IMR-90 (cell line): ENCODE measurements at regions of chr3 and their contacts with region 1.

Region 1: GRCh38 chr3:170414202-170414663 is 4.4 kb upstream of the CLDN11 start:
- DNase-seq: peak; percentile 93
- ATAC-seq: peak; percentile 41
- H3K4me3 ChIP-seq: no peak overlapping the region
- H3K27ac ChIP-seq: no peak overlapping the region
- H3K4me1 ChIP-seq: peaks cover 2% of the 10 kb centered on the region
- H3K27me3 ChIP-seq: no peaks in the 10 kb centered on the region
- CTCF ChIP-seq: peak; percentile 98
- POLR2A ChIP-seq: no peak
- RAD21 ChIP-seq: peak; percentile 96

Region 2: GRCh38 chr3:170307671-170308403 is 106.4 kb before region 1 on chr3:
- CTCF ChIA-PET with region 1: interaction called, 7 read pairs
- POLR2A ChIA-PET with region 1: interaction called, 4 read pairs
- dilution Hi-C with region 1: no loop called
- in situ Hi-C with region 1: no loop called
- intact Hi-C with region 1: loop called (anchors 1 kb)
- DNase-seq: peak; percentile 79
- ATAC-seq: peak; percentile 10; the same call in 1 of the 2 replicates
- H3K4me3 ChIP-seq: no peak overlapping the region
- H3K27ac ChIP-seq: no peak overlapping the region
- H3K4me1 ChIP-seq: peaks cover 4% of the 10 kb centered on the region
- H3K27me3 ChIP-seq: no peaks in the 10 kb centered on the region
- CTCF ChIP-seq: no peak
- POLR2A ChIP-seq: no peak
- RAD21 ChIP-seq: no peak

Region 3: DNA sequence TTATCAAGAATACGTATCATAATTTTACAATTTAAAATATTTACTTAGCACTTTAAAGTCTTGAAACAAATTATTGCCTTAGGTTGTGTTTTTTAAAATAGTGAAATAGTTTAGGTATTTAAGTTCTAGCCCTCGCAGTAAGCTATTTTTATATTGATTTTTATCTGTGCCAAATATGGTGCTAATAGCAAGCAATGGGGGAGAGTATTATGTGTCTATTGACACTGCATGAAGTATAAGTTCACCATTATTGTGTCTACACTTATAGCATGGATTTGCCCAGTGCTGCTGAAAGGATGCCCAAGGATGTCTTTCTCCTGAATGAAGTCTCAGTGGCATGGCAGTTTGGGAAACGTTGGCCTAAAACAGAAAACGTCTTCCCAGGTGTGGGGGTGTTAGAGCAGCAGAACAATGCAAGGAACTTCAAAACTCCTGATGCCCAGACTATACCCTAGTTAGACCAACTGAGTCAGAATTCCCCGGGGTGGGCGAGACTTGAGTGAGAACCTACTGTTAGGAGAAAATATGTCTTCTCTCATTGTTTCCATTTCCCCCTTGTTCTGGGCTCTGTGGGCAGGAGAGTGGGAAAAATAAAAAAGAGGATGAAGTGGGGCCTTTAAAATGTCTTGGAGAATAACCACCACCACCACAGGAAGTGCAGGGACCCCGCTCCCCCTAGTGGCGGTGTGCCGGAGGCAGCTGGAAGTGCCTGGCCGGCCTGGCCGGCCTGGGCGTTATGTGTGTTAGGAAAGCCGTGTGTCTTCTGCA is 275.8 kb after region 1 on chr3:
- CTCF ChIA-PET with region 1: no interaction called
- POLR2A ChIA-PET with region 1: no interaction called
- dilution Hi-C with region 1: no loop called
- in situ Hi-C with region 1: no loop called
- intact Hi-C with region 1: loop called (anchors 2 kb)
- DNase-seq: peak; percentile 52
- ATAC-seq: peak; percentile 57
- H3K4me3 ChIP-seq: no peak overlapping the region
- H3K27ac ChIP-seq: peak overlapping the region; percentile 85
- H3K4me1 ChIP-seq: peaks cover 14% of the 10 kb centered on the region
- H3K27me3 ChIP-seq: no peaks in the 10 kb centered on the region
- CTCF ChIP-seq: peak; percentile 65
- POLR2A ChIP-seq: no peak
- RAD21 ChIP-seq: peak; percentile 72

Region 4: GRCh38 chr3:170811928-170812591 is 397.8 kb after region 1 on chr3:
- CTCF ChIA-PET with region 1: interaction called, 101 read pairs
- POLR2A ChIA-PET with region 1: no interaction called
- dilution Hi-C with region 1: no loop called
- in situ Hi-C with region 1: loop called (anchors 5 kb)
- intact Hi-C with region 1: loop called (anchors 1 kb)
- DNase-seq: peak; percentile 78
- ATAC-seq: peak; percentile 81
- H3K4me3 ChIP-seq: no peak overlapping the region
- H3K27ac ChIP-seq: peak overlapping the region; percentile 1; the same call in 1 of the 2 replicates
- H3K4me1 ChIP-seq: peaks cover 6% of the 10 kb centered on the region
- H3K27me3 ChIP-seq: no peaks in the 10 kb centered on the region
- CTCF ChIP-seq: peak; percentile 94
- POLR2A ChIP-seq: peak; percentile 37; the same call in 1 of the 2 replicates
- RAD21 ChIP-seq: peak; percentile 92

Region 5: GRCh38 chr3:170908235-170909116 is 494.2 kb after region 1 on chr3 and contains the start of gene EIF5A2:
- CTCF ChIA-PET with region 1: no interaction called
- POLR2A ChIA-PET with region 1: no interaction called
- dilution Hi-C with region 1: no loop called
- in situ Hi-C with region 1: no loop called
- intact Hi-C with region 1: loop called (anchors 5 kb)
- DNase-seq: peak; percentile 93
- ATAC-seq: peak; percentile 96
- H3K4me3 ChIP-seq: peak within 1 kb of the TSS; percentile 80
- H3K27ac ChIP-seq: peak within 1 kb of the TSS; percentile 91
- H3K4me1 ChIP-seq: peaks cover 7% of the 10 kb centered on the region
- H3K27me3 ChIP-seq: no peaks in the 10 kb centered on the region
- CTCF ChIP-seq: no peak
- POLR2A ChIP-seq: peak; percentile 88
- RAD21 ChIP-seq: no peak
- total RNA-seq, gene EIF5A2: 7.7 and 15.0 TPM in 2 replicates

Region 6: DNA sequence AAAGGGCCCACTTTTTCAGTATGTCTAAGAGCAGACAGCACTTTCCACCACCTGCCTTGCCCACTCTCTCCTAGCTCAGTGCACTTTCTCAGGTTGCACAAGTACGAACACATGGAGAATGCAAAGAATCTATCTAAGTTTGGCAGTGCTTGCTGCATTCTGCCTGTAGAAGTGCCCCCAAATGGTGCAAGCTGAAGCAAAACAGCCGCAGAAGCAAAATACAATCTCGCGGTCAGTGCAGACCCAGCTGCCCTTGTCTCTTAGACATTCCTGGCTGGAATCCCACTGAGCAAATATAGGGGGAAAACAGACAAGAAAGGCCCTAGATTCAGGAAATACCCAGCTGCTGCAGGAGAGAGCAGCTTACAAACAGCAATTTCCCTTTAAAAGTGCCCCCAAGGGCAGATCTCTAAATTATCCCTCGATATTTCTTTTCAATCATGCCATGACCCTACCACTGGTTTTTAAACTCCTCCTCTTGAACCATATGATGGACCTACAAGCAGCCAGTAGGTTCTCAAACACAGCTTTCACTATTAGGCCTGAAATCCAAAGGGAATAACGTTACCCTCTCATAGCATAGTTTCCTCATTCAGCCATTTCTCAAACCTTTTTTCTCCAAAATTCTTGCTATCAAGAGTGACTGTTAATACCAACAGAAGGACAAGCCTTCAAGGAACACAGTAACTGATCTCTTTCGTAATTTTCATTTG is 979.0 kb after region 1 on chr3:
- CTCF ChIA-PET with region 1: no interaction called
- POLR2A ChIA-PET with region 1: no interaction called
- dilution Hi-C with region 1: no loop called
- in situ Hi-C with region 1: no loop called
- intact Hi-C with region 1: no loop called
- DNase-seq: peak; percentile 58
- ATAC-seq: peak; percentile 49
- H3K4me3 ChIP-seq: no peak overlapping the region
- H3K27ac ChIP-seq: peak overlapping the region; percentile 26; the same call in 1 of the 2 replicates
- H3K4me1 ChIP-seq: peaks cover 2% of the 10 kb centered on the region; the same call in 1 of the 2 replicates
- H3K27me3 ChIP-seq: no peaks in the 10 kb centered on the region
- CTCF ChIP-seq: no peak
- POLR2A ChIP-seq: no peak
- RAD21 ChIP-seq: no peak